Dorsolateral prefrontal cortex (tissue), 120 donors: ENCODE measurements at regions of chr7 and their contacts with region 1.

Region 1: DNA sequence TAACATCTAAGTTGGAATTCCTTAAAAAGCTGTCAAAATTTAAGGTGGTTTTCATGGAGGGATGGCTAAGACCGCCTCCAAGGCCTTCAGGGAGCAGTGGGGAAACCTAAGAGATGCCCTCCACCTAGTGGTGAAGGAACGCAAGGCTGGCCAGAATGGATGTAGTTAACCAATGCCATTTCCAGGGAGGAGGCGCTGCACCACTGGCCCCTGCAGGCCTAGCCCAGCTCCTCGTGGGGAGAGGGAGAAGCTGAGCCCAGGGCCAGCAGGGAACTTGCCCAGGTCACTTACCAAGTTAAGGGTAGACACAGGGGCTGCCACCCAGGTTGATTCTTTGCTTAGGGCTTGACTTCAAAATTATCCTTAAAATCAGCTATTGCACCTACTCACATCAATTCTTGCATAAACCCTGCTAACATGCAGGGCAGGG is 32.0 kb downstream of the FIGNL1 start:
- DNase-seq: peak in 9 of 10 donors; percentile 24 to 79 (median 71)
- H3K4me3 ChIP-seq: no peak overlapping the region
- H3K27ac ChIP-seq: no peak overlapping the region
- H3K27me3 ChIP-seq: no peaks in the 10 kb centered on the region
- CTCF ChIP-seq: peak; percentile 44 to 85 (median 73)

Region 2: GRCh38 chr7:50092579-50093491 is 325.3 kb before region 1 on chr7 and contains the start of gene ZPBP:
- intact Hi-C with region 1: loop called in 1 of 2 experiments (anchors 2 kb)
- DNase-seq: peak in 3 of 10 donors; percentile 28 to 49 (median 47)
- H3K4me3 ChIP-seq: peak within 1 kb of the TSS; percentile 16 to 67 (median 53)
- H3K27ac ChIP-seq: no peak within 1 kb of the TSS
- H3K27me3 ChIP-seq: no peaks in the 10 kb centered on the region
- CTCF ChIP-seq: peak; percentile 56 to 94 (median 79)
- total RNA-seq, gene ZPBP: 0.42 to 0.86 (median 0.60) TPM in 5 of 120 experiments, not detected in the others

Region 3: DNA sequence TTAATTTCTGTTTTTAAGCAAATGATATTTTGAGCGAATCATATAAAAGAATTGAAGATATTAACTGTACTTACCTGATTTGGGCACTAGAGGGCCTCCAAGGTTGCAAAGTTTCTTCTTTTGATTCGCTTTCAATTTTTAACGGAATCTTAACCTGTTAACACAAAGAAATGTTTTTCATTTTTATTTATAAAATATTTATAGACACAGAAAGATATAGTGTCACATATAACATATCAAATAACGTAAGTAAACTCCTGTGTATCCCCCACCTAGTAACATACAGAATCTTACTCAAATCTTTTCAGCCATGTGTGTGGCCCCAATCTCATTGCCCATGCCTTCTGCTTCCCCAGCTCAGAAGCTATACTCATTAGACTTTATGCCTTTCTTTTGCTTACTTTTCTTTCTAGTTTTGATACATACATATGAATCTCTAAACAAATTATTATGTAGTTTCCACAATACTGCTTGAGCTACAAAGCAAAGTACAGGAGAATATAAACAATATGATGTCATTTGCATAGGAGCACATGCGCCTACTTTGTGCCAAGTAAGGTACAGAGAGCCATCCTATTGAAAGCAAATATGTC is 275.6 kb before region 1 on chr7:
- intact Hi-C with region 1: loop called in 1 of 2 experiments (anchors 10 kb)
- DNase-seq: no peak
- H3K4me3 ChIP-seq: peak overlapping the region in 6 of 59 donors; percentile 12 to 28 (median 16)
- H3K27ac ChIP-seq: no peak overlapping the region
- H3K27me3 ChIP-seq: peaks cover 0 to 7% (median 0%) of the 10 kb centered on the region in 45 donors
- CTCF ChIP-seq: peak; percentile 57 to 82 (median 73)

Region 4: DNA sequence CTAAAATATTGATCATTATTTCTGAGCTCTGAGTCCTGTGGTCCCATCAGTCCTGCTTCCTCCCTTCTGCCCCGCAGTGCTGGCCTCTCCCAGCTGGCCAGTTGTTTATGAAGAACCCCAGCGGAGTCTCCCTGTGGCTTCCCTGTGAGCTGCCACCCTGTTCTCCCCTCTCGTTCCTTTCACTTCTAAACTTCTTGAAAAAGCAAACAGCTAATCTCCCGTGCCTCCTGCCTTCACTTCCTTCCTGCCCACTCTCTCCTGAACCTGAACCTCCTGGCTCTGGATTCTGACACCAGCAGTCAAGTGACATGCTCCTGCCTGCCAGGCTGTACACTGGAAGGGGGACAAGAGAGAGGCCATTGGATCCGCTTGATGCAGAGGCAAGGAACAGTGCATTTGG is 261.4 kb before region 1 on chr7:
- intact Hi-C with region 1: no loop called
- DNase-seq: no peak
- H3K4me3 ChIP-seq: no peak overlapping the region
- H3K27ac ChIP-seq: no peak overlapping the region
- H3K27me3 ChIP-seq: no peaks in the 10 kb centered on the region
- CTCF ChIP-seq: no peak

Region 5: DNA sequence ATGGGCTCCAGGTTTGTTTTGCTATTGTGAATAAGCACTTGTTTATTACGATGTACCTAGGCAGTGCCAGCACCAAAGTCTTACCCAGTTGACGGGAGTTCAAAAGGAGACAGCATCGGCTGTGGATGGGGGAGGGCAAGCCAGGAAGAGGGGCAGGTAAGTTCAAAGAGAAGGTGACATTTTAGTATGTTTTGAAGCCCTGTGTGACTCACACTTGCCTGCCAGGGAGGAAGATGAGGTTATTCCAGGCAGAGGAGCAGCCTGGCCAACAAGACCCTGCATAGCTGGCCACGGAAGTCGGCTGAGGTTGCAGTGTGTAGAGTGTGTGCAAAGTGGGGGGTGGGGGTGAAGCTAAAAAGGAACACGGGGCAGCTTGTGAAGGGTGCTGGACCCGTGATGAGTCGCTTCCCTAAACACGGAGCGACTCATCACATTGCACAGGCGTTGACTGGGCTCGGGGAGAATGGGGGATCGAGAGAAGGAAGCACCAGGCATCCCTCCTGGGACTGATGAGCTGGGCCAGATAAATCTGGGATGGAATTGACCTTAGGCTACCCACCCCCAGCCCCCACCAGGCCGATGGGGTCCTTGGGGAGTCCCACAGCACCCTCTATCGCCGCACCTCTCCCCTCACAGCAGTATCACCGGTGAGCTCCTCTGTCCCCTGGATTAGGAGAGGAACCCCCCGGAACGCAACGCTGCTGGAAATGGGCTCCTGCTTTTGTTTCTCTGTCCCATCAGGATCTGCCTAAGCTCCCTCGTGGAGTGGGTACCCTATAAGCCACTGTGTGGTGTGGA is 211.4 kb before region 1 on chr7:
- intact Hi-C with region 1: loop called in 1 of 2 experiments (anchors 5 kb)
- DNase-seq: no peak
- H3K4me3 ChIP-seq: no peak overlapping the region
- H3K27ac ChIP-seq: no peak overlapping the region
- H3K27me3 ChIP-seq: peaks cover 0 to 5% (median 0%) of the 10 kb centered on the region in 45 donors
- CTCF ChIP-seq: no peak